Gastrocnemius medialis (tissue), 4 donors: ENCODE measurements at regions of chr20 and their contacts with region 1.

Region 1: GRCh38 chr20:57432874-57433491 is 41.8 kb downstream of the RBM38 start:
- DNase-seq: peak; percentile 70 to 85
- ATAC-seq: peak; percentile 17 to 32
- H3K4me3 ChIP-seq: no peak overlapping the region
- H3K27ac ChIP-seq: peak overlapping the region; percentile 70 to 97 (median 85)
- H3K4me1 ChIP-seq: peaks cover 43 to 48% of the 10 kb centered on the region in 2 donors
- H3K27me3 ChIP-seq: no peaks in the 10 kb centered on the region
- CTCF ChIP-seq: no peak
- POLR2A ChIP-seq: no peak

Region 2: GRCh38 chr20:57223648-57224489 is 209.1 kb before region 1 on chr20:
- in situ Hi-C with region 1: no loop called
- intact Hi-C with region 1: no loop called
- DNase-seq: peak; percentile 17 to 56
- ATAC-seq: peak; percentile 68 to 71
- H3K4me3 ChIP-seq: no peak overlapping the region
- H3K27ac ChIP-seq: no peak overlapping the region
- H3K4me1 ChIP-seq: no peaks in the 10 kb centered on the region
- H3K27me3 ChIP-seq: peaks cover 0 to 5% (median 0%) of the 10 kb centered on the region in 3 donors
- CTCF ChIP-seq: no peak
- POLR2A ChIP-seq: no peak

Region 3: GRCh38 chr20:57361212-57361915 is 71.6 kb before region 1 on chr20:
- in situ Hi-C with region 1: no loop called
- intact Hi-C with region 1: no loop called
- DNase-seq: no peak
- ATAC-seq: no peak
- H3K4me3 ChIP-seq: no peak overlapping the region
- H3K27ac ChIP-seq: no peak overlapping the region
- H3K4me1 ChIP-seq: no peaks in the 10 kb centered on the region
- H3K27me3 ChIP-seq: no peaks in the 10 kb centered on the region
- CTCF ChIP-seq: no peak
- POLR2A ChIP-seq: no peak

Region 4: GRCh38 chr20:57398231-57398821 is 34.7 kb before region 1 on chr20:
- in situ Hi-C with region 1: loop called in 2 of 4 experiments (anchors 5 kb)
- intact Hi-C with region 1: loop called (anchors 1 kb)
- DNase-seq: peak; percentile 78 to 92
- ATAC-seq: peak; percentile 39 to 42
- H3K4me3 ChIP-seq: peak overlapping the region; percentile 11 to 35 (median 30)
- H3K27ac ChIP-seq: peak overlapping the region; percentile 96 to 99 (median 98)
- H3K4me1 ChIP-seq: peaks cover 79 to 97% of the 10 kb centered on the region in 2 donors
- H3K27me3 ChIP-seq: no peaks in the 10 kb centered on the region
- CTCF ChIP-seq: no peak
- POLR2A ChIP-seq: peak; percentile 52 to 70

Region 5: GRCh38 chr20:57407541-57407956 is 25.4 kb before region 1 on chr20:
- in situ Hi-C with region 1: no loop called
- intact Hi-C with region 1: loop called (anchors 1 kb)
- DNase-seq: no peak
- ATAC-seq: no peak
- H3K4me3 ChIP-seq: no peak overlapping the region
- H3K27ac ChIP-seq: peak overlapping the region; percentile 82 to 99 (median 98)
- H3K4me1 ChIP-seq: peaks cover 22 to 78% of the 10 kb centered on the region in 2 donors
- H3K27me3 ChIP-seq: no peaks in the 10 kb centered on the region
- CTCF ChIP-seq: no peak
- POLR2A ChIP-seq: no peak

Region 6: DNA sequence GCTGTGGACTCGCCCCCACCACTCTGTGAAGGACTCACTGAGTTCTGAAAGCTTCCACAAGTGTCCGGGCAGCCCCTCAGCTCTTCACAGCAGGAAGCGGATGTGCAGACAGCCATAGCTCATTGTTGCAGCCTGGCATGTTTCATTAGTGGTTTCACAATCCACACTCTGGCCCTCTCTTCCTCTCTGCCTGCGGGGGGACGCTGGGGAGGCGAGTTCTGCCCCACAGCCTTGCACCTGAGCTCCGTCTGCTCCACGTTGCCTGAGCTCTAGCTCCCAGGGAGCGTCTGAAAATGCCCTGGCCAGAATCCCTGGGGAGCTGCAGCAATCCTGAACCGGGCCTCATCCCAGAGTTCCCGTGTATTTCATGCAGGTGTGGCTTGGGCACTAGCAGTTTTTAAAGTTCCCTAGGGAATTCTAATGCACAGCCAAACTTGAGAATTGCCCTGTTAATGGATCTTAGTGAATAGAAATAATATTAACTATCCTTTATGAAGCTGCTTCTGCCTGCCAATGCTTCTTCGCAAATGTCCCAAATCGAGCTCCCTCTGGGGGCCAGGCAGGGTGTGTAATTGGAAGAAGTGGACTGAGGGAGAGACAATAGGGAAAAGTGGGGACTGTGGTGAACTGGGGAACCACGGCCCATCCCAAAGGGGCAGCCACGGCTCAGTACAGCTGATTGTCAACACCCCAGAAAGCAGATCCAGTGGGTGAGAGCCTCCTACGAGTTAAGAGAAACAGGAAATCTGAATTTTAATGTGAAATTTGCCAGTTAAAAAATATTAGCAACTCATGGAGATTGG is 40.5 kb after region 1 on chr20:
- in situ Hi-C with region 1: no loop called
- intact Hi-C with region 1: loop called (anchors 2 kb)
- DNase-seq: no peak
- ATAC-seq: no peak
- H3K4me3 ChIP-seq: no peak overlapping the region
- H3K27ac ChIP-seq: peak overlapping the region in 2 of 4 donors; percentile 14 to 34
- H3K4me1 ChIP-seq: peaks cover 34 to 56% of the 10 kb centered on the region in 2 donors
- H3K27me3 ChIP-seq: peaks cover 0 to 2% (median 0%) of the 10 kb centered on the region in 3 donors
- CTCF ChIP-seq: peak in 1 of 5 experiments; percentile 28
- POLR2A ChIP-seq: no peak

Region 7: GRCh38 chr20:57748601-57749130 is 315.7 kb after region 1 on chr20:
- in situ Hi-C with region 1: no loop called
- intact Hi-C with region 1: no loop called
- DNase-seq: peak; percentile 43 to 69
- ATAC-seq: peak; percentile 62 to 76
- H3K4me3 ChIP-seq: peak overlapping the region; percentile 40 to 71 (median 52)
- H3K27ac ChIP-seq: peak overlapping the region; percentile 21 to 58 (median 48)
- H3K4me1 ChIP-seq: peaks cover 20 to 22% of the 10 kb centered on the region in 2 donors
- H3K27me3 ChIP-seq: no peaks in the 10 kb centered on the region
- CTCF ChIP-seq: peak in 1 of 5 experiments; percentile 11
- POLR2A ChIP-seq: no peak